ENCODE measurements at regions of chr5 and their contacts with region 1.

Region 1: DNA sequence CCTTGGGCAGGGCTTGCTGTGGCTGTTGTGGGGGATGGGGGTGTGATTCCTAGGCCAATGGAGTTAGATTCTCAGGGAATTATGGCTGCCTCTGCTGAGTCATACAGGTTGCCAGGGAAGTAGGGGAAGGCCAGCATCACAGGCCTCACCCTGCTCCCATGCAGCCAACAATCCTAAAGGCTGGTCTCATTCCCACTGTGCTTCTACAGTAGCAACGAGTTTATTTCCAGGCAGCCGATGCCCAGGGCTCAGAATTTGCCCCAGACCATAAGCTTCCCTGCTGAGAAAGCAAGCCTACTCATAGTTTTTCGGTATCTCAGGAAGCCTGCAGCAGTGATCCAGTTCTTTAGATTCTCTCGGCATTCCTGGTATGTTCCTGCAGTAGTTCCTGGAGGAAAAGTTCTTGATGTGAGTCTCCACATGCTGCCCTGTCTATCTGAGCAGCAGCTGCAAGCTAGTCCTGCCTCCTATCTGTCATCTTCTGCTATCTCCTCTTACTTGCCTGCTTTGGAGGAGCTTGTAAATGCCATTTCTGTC is 59.3 kb upstream of the SELENOP start:
- DNase-seq: peak in 1 of 4 experiments; percentile 48
- ATAC-seq: peak; percentile 41
- H3K4me3 ChIP-seq: no peak overlapping the region
- H3K27ac ChIP-seq: no peak overlapping the region
- H3K4me1 ChIP-seq: peaks cover 16 to 32% of the 10 kb centered on the region in 2 experiments; a peak in 4 of 5 replicates
- H3K27me3 ChIP-seq: no peaks in the 10 kb centered on the region
- CTCF ChIP-seq: peak; percentile 21 to 26 (median 22); a peak in 2 of 6 replicates
- EP300 ChIP-seq: no peak
- POLR2A ChIP-seq: no peak
- RAD21 ChIP-seq: peak in 1 of 2 experiments; percentile 48; a peak in 2 of 4 replicates

Region 2: DNA sequence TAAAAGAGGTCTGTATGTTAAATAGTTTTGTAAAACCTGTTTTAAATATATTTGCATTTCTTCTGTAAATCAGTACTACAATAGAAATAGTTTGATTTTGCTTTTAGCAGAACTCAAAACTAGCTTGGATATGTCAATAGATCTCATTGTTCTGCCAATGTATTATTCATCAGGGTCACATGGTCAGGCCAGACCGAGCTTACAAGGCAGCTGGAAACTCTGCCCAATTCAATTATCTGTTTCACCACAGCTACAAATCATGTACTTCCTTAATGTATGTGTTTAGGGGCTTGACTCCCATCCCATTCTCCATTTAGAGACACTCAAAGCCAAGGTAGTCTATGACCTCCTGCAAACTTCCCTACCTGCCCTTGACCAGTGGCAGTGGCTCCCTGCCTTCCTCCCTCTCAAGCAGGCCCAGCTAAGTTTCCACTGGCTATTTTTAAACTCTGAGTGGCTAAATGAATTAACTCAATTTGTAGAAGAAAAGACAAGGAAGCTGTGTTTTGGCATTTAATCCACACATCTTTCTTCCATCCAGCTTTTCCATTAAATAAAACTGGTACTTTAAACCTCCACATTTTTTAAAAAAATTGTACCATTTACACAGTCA is 12.8 kb before region 1 on chr5:
- CTCF ChIA-PET with region 1: no interaction called
- POLR2A ChIA-PET with region 1: interaction called, 16 read pairs
- in situ Hi-C with region 1: no loop called
- intact Hi-C with region 1: no loop called
- DNase-seq: no peak
- ATAC-seq: peak; percentile 51
- H3K4me3 ChIP-seq: no peak overlapping the region
- H3K27ac ChIP-seq: no peak overlapping the region
- H3K4me1 ChIP-seq: peaks cover 0 to 15% of the 10 kb centered on the region in 2 experiments; a peak in 4 of 5 replicates
- H3K27me3 ChIP-seq: no peaks in the 10 kb centered on the region
- CTCF ChIP-seq: no peak
- EP300 ChIP-seq: no peak
- POLR2A ChIP-seq: no peak
- RAD21 ChIP-seq: no peak

Region 3: DNA sequence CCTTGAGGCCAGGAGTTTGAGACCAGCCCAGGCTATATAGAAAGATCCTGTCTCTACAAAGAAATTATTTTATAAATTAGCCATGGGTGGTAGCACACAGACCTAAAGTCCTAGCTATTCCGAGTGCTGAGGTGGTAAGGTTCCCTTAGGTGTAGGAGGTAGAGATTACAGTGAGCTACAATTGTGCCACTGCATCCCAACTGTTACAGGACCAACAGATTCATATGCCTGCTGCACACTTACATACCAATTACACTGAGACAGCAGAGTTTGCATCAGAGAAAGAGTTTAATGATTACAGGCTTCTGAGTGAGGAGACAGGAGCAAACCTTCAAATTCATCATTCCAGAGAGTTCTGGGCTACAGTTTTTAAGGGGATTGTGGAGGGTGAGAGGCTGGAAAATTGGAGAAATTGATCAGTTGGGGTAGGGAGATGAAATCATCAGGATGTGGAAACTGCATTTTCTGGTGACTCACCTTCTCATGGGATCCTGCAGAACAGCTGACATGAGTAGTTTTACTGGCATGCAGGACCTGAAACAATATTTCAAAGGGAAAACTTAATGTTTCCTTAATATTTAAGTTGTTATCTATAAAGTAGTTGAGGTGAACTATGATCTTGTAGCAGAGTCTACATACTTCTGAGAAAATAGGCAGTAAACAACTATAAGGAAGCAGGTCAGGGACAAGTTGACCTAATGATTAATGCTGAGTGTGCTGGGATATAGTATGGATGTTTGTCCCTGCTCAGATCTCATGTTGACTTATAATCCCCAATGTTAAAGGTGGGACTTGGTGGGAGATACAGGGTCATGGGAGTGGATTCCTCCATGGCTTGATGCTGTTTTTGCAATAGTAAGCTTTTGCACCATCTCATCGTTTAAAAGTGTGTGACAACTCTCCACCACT is 114.4 kb after region 1 on chr5:
- CTCF ChIA-PET with region 1: no interaction called
- POLR2A ChIA-PET with region 1: no interaction called
- in situ Hi-C with region 1: no loop called
- intact Hi-C with region 1: no loop called
- DNase-seq: no peak
- ATAC-seq: no peak
- H3K4me3 ChIP-seq: no peak overlapping the region
- H3K27ac ChIP-seq: no peak overlapping the region
- H3K4me1 ChIP-seq: peaks cover 14 to 17% of the 10 kb centered on the region in 2 experiments; a peak in 4 of 5 replicates
- H3K27me3 ChIP-seq: no peaks in the 10 kb centered on the region
- CTCF ChIP-seq: no peak
- EP300 ChIP-seq: no peak
- POLR2A ChIP-seq: no peak
- RAD21 ChIP-seq: no peak

Measured in K562 (cell line).